Dorsolateral prefrontal cortex (tissue), 120 donors: ENCODE measurements at regions of chr1 and their contacts with region 1.

Region 1: GRCh38 chr1:64744492-64745180 is at the start of gene RAVER2:
- DNase-seq: peak in 7 of 10 donors; percentile 34 to 67 (median 57)
- H3K4me3 ChIP-seq: peak within 1 kb of the TSS; percentile 56 to 87 (median 76)
- H3K27ac ChIP-seq: peak within 1 kb of the TSS in 54 of 59 donors; percentile 30 to 91 (median 76)
- H3K27me3 ChIP-seq: no peaks in the 10 kb centered on the region
- CTCF ChIP-seq: peak in 47 of 56 donors; percentile 7 to 56 (median 33)
- total RNA-seq, gene RAVER2: 6.1 to 24.9 (median 12.8) TPM

Region 2: GRCh38 chr1:64811131-64811530 is 66.5 kb after region 1 on chr1:
- intact Hi-C with region 1: loop called in 1 of 2 experiments (anchors 10 kb)
- DNase-seq: no peak
- H3K4me3 ChIP-seq: no peak overlapping the region
- H3K27ac ChIP-seq: no peak overlapping the region
- H3K27me3 ChIP-seq: no peaks in the 10 kb centered on the region
- CTCF ChIP-seq: no peak